Endothelial cell of umbilical vein (primary cell): ENCODE measurements at regions of chr7 and their contacts with region 1.

Region 1: DNA sequence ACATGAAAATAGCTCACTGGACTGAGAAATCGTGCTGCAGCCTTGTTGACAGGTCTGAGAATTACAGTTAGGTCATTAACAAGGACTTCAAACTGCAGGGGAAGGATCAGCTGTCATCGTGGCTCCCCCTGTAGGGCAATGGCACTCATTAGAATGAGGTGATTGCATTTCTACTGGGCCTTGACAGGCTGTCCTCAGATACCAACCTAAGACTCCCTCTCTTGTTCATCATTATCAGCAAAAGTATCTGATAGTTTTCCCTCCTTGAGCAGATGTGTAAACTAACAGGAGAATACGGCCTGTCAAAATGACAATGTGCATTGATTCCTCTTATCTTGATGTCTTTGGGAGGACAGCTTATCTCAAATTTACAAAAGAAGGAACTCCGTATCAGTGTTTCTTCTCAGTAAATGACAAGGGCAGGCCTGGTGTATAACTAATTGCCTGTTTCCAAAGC is 648.5 kb upstream of the LRRN3 start:
- DNase-seq: peak; percentile 68
- H3K4me3 ChIP-seq: no peak overlapping the region
- H3K27ac ChIP-seq: no peak overlapping the region
- H3K4me1 ChIP-seq: no peaks in the 10 kb centered on the region
- H3K27me3 ChIP-seq: no peaks in the 10 kb centered on the region
- CTCF ChIP-seq: peak; percentile 64 to 81
- POLR2A ChIP-seq: no peak

Region 2: GRCh38 chr7:108613112-108613759 is 1829.2 kb before region 1 on chr7:
- CTCF ChIA-PET with region 1: interaction called, 4 read pairs
- POLR2A ChIA-PET with region 1: no interaction called
- dilution Hi-C with region 1: no loop called
- intact Hi-C with region 1: loop called (anchors 5 kb)
- DNase-seq: peak; percentile 59
- H3K4me3 ChIP-seq: no peak overlapping the region
- H3K27ac ChIP-seq: no peak overlapping the region
- H3K4me1 ChIP-seq: no peaks in the 10 kb centered on the region
- H3K27me3 ChIP-seq: peaks cover 3 to 11% of the 10 kb centered on the region in 2 experiments
- CTCF ChIP-seq: peak; percentile 30 to 35
- POLR2A ChIP-seq: no peak

Region 3: GRCh38 chr7:109844362-109844761 is 598.0 kb before region 1 on chr7:
- CTCF ChIA-PET with region 1: interaction called, 6 read pairs
- POLR2A ChIA-PET with region 1: no interaction called
- dilution Hi-C with region 1: no loop called
- intact Hi-C with region 1: loop called (anchors 1 kb)
- DNase-seq: peak; percentile 29
- H3K4me3 ChIP-seq: no peak overlapping the region
- H3K27ac ChIP-seq: no peak overlapping the region
- H3K4me1 ChIP-seq: no peaks in the 10 kb centered on the region
- H3K27me3 ChIP-seq: no peaks in the 10 kb centered on the region
- CTCF ChIP-seq: peak; percentile 20 to 27
- POLR2A ChIP-seq: no peak

Region 4: DNA sequence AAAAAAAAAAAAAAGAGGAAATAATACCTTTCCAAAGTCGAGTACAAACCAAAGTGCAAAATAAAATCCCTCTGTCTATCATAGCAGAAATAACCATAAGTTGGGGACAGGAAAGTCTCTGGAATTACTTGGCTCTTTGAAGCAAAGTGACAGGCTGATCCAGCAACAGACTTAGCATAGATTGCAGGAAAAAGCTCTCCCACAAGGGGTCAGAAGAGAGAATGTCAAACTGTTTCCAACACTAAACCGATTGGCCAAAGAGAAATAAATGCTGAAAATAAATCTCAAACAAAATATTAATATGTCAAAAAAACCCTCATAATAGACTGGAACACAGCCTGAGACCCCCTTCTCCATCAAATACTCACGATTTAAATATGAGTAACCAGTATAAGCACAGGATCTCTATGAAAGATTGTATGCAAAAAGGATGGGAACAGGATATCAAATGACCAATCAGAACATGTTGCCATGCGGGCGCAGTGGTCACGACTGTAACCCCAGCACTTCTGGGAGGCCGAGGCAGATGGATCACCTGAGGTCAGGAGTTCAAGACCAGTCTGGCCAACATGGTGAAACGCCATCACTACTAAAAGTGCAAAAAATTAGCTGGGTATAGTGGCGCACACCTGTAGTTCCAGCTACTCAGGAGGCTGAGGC is 352.2 kb before region 1 on chr7:
- CTCF ChIA-PET with region 1: interaction called, 49 read pairs
- POLR2A ChIA-PET with region 1: no interaction called
- dilution Hi-C with region 1: no loop called
- intact Hi-C with region 1: loop called (anchors 1 kb)
- DNase-seq: peak; percentile 48
- H3K4me3 ChIP-seq: no peak overlapping the region
- H3K27ac ChIP-seq: no peak overlapping the region
- H3K4me1 ChIP-seq: no peaks in the 10 kb centered on the region
- H3K27me3 ChIP-seq: no peaks in the 10 kb centered on the region
- CTCF ChIP-seq: peak; percentile 40 to 58
- POLR2A ChIP-seq: no peak

Region 5: DNA sequence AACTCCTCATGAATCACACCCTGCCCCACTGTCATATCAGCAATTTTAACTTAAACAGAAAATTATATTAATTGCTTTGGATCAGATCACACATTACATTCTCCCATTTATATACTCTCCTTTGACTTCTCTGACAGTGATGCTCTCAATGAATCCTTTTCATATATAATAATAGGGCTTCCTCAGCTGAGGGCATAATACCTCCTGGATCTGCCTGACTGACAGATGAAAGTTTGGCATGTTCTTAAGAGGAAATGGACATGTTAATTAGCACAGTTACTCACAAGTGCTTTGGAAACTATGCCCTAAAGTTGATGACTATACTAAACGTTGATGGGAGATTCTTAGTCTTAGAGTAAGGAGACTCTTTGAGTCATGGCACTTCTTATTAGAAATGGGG is 170.3 kb after region 1 on chr7:
- CTCF ChIA-PET with region 1: no interaction called
- POLR2A ChIA-PET with region 1: no interaction called
- dilution Hi-C with region 1: no loop called
- intact Hi-C with region 1: no loop called
- DNase-seq: no peak
- H3K4me3 ChIP-seq: no peak overlapping the region
- H3K27ac ChIP-seq: no peak overlapping the region
- H3K4me1 ChIP-seq: no peaks in the 10 kb centered on the region
- H3K27me3 ChIP-seq: no peaks in the 10 kb centered on the region
- CTCF ChIP-seq: no peak
- POLR2A ChIP-seq: no peak

Region 6: GRCh38 chr7:110693344-110693743 is 250.9 kb after region 1 on chr7:
- CTCF ChIA-PET with region 1: no interaction called
- POLR2A ChIA-PET with region 1: no interaction called
- dilution Hi-C with region 1: no loop called
- intact Hi-C with region 1: no loop called
- DNase-seq: no peak
- H3K4me3 ChIP-seq: no peak overlapping the region
- H3K27ac ChIP-seq: no peak overlapping the region
- H3K4me1 ChIP-seq: no peaks in the 10 kb centered on the region
- H3K27me3 ChIP-seq: no peaks in the 10 kb centered on the region
- CTCF ChIP-seq: no peak
- POLR2A ChIP-seq: no peak

Region 7: DNA sequence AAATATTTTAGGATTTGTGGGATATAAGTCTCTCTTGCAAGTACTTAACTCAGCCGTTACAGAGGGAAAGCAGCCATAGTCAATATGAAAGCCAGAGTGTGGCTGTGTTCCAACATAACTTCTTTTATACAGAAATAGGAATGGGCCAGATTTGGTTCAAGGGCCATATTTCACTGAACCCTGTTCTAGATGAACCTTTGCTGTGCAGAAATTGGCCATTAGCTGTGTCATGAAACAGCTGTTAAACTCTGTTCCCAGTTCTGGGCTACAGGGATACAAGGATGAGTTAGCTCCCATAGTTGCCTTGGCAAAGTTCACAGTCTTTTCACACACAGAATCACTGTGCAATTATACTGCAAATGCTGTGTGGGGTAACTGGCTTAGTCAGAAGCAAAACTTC is 434.6 kb after region 1 on chr7:
- CTCF ChIA-PET with region 1: no interaction called
- POLR2A ChIA-PET with region 1: no interaction called
- dilution Hi-C with region 1: no loop called
- intact Hi-C with region 1: no loop called
- DNase-seq: no peak
- H3K4me3 ChIP-seq: no peak overlapping the region
- H3K27ac ChIP-seq: no peak overlapping the region
- H3K4me1 ChIP-seq: no peaks in the 10 kb centered on the region
- H3K27me3 ChIP-seq: no peaks in the 10 kb centered on the region
- CTCF ChIP-seq: no peak
- POLR2A ChIP-seq: no peak

Region 8: DNA sequence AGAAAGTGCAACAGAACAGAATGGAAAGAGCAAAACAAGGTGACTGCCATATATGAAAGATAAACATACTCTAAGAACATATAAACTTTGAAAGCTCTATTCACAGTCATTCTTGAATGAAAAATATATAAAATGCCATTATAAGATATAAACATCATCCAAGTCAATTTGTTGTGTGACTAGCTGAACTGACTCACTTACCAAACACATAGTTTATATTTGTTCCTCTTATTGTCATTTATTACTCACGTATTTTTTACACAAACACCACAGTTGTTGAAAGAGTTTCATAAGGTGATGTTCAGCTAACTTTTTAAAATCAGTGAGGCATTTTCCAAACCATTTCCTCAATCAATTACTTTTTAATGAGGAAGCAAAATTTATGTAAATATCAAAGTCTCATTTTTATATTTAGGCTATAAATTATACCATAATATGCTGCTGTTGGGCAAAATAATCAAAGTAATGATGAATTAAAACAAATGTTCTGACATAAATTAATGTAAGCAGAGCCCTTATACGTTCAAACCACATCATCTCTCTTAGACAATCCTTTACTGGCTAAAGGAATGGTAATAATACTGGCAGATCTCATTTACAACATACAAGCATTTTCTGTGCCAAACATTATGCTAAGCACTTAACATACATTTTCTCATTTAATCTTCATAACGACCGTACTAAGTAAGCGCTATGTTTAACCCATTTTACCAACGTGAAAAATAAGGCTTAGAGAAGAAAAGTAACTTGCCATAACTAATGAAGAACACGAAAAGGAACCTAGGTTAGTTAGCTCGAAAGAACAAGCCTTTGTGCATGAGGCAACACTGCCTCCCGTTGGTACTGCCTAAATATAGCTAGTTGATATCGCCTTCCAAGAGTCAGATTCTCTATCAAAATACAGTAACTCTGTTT is 655.9 kb after region 1 on chr7:
- CTCF ChIA-PET with region 1: interaction called, 14 read pairs
- POLR2A ChIA-PET with region 1: no interaction called
- dilution Hi-C with region 1: no loop called
- intact Hi-C with region 1: loop called (anchors 10 kb)
- DNase-seq: peak; percentile 54
- H3K4me3 ChIP-seq: no peak overlapping the region
- H3K27ac ChIP-seq: no peak overlapping the region
- H3K4me1 ChIP-seq: no peaks in the 10 kb centered on the region
- H3K27me3 ChIP-seq: no peaks in the 10 kb centered on the region
- CTCF ChIP-seq: peak; percentile 40 to 59
- POLR2A ChIP-seq: no peak